Activated CD4-positive, alpha-beta T cell treated with anti-CD3 and anti-CD28 coated beads, Interleukin-2, amount 10 ng/mL, durations not matched to agents 24 days and 14 days (primary cell): ENCODE measurements at regions of chr20 and their contacts with region 1.

Region 1: DNA sequence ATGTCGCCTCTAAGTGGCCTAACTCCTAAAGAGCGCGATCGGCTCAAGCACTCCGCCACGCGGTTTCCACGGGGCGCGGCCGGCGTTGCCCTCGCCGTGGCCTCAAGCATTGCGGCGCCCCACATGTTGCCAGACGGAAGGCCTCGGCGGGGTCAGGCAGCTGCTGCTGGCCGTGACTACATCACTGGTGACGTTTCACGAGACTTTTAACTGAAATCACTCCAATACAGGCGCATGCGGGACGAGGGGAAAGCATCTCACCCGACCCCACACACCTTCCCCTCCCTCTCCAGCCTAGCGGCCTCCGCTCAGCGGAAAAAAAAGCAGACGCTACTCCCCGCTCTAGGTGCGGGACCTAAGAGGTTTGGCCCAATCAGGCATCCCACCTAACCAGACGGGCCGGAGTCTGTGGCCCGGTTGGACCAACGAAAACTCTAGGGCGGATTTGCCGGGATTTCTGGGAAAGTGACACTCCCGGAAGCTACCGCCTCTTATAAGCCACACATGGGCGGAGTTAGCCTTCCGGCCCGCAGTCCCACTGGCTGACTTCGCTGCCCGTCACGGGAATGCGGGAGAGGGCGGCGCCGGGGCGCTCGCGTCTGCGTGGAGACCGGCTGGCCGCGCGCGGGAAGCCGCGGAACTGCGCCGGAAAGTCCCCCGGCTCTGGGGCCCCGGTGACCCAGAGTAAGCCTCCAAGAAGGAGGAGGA is at the start of gene NXT1:
- DNase-seq: peak; percentile 99
- H3K4me3 Mint-ChIP-seq: peak within 1 kb of the TSS; percentile 88
- H3K27ac Mint-ChIP-seq: peak within 1 kb of the TSS; percentile 100
- H3K4me1 Mint-ChIP-seq: peaks cover 30% of the 10 kb centered on the region
- H3K27me3 Mint-ChIP-seq: no peaks in the 10 kb centered on the region
- total RNA-seq, gene NXT1: 57.0 and 59.9 TPM in 2 replicates

Region 2: GRCh38 chr20:23361598-23362384 is 11.4 kb after region 1 on chr20 and contains the start of gene GZF1:
- intact Hi-C with region 1: loop called (anchors 1 kb)
- DNase-seq: peak; percentile 100
- H3K4me3 Mint-ChIP-seq: peak within 1 kb of the TSS; percentile 92
- H3K27ac Mint-ChIP-seq: peak within 1 kb of the TSS; percentile 94
- H3K4me1 Mint-ChIP-seq: peaks cover 53% of the 10 kb centered on the region
- H3K27me3 Mint-ChIP-seq: peaks cover 2% of the 10 kb centered on the region
- total RNA-seq, gene GZF1: 10.3 and 14.7 TPM in 2 replicates

Region 3: GRCh38 chr20:23530937-23531567 is 180.7 kb after region 1 on chr20:
- intact Hi-C with region 1: no loop called
- DNase-seq: no peak
- H3K4me3 Mint-ChIP-seq: no peak overlapping the region
- H3K27ac Mint-ChIP-seq: no peak overlapping the region
- H3K4me1 Mint-ChIP-seq: no peaks in the 10 kb centered on the region
- H3K27me3 Mint-ChIP-seq: no peaks in the 10 kb centered on the region

Region 4: GRCh38 chr20:23606652-23607049 is 256.3 kb after region 1 on chr20:
- intact Hi-C with region 1: loop called (anchors 1 kb)
- DNase-seq: peak; percentile 91
- H3K4me3 Mint-ChIP-seq: no peak overlapping the region
- H3K27ac Mint-ChIP-seq: no peak overlapping the region
- H3K4me1 Mint-ChIP-seq: peaks cover 3% of the 10 kb centered on the region
- H3K27me3 Mint-ChIP-seq: no peaks in the 10 kb centered on the region